Cardiac septum (tissue), 1 donor: ENCODE measurements at regions of chr5 and their contacts with region 1.

Region 1: GRCh38 chr5:119322948-119323537 is 32.8 kb upstream of the TNFAIP8 start:
- DNase-seq: no peak

Region 2: GRCh38 chr5:119131530-119132313 is 191.3 kb before region 1 on chr5:
- intact Hi-C with region 1: no loop called
- DNase-seq: no peak

Region 3: DNA sequence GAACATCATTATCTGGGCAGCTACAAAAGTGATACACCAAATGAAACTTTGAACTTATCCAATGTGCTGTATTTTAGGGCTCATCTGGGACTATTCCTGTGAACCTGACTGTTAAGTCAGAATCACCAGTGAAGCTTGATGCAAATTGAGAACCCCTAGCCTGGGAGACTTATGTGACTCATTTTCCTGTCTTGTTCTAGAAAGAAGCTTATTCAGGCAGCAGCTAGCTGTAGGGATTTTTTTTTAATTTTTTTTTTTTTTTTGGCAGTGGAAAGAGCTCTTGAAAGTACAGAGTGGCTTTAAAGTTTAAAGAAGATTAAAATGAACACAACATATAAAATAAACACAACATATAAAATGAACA is 48.3 kb before region 1 on chr5:
- intact Hi-C with region 1: loop called (anchors 5 kb)
- DNase-seq: no peak

Region 4: GRCh38 chr5:119287547-119288073 is 35.4 kb before region 1 on chr5:
- intact Hi-C with region 1: loop called (anchors 5 kb)
- DNase-seq: no peak

Region 5: DNA sequence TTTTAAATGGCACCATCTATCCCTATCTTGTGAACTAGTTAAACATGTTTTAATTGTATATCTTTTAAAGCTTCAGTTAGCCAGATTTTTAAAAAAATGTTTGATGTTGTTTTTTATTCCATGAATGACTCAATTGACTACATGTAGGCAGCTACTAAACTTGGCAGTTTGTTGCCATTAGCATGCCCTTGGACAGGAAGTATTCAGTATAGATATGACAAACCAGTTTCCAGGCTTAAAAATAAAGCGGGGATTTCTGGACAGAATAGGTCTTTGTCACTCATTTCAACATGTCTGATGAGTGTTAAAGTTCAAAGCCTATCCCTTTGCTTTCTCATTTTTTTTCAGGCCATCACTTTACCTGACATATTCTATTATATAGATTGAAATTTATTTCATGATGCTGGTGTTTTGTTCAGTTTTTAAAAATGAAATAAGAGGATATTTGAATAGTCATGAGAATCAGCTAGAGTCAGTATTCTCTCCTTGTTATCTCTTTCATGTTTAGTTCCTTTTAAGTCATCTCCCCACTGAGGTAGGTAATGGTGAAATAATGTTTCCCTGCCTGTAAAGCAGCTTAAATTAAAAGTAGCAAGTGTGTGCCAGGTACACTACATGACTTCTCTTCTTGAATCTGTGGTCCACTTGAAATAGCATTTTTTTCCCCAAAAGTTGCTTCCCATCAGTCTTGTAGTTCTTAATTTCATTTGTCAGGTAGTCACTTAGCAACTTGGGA is 44.6 kb after region 1 on chr5:
- intact Hi-C with region 1: no loop called
- DNase-seq: no peak